ENCODE measurements at regions of chrX and their contacts with region 1.

Region 1: DNA sequence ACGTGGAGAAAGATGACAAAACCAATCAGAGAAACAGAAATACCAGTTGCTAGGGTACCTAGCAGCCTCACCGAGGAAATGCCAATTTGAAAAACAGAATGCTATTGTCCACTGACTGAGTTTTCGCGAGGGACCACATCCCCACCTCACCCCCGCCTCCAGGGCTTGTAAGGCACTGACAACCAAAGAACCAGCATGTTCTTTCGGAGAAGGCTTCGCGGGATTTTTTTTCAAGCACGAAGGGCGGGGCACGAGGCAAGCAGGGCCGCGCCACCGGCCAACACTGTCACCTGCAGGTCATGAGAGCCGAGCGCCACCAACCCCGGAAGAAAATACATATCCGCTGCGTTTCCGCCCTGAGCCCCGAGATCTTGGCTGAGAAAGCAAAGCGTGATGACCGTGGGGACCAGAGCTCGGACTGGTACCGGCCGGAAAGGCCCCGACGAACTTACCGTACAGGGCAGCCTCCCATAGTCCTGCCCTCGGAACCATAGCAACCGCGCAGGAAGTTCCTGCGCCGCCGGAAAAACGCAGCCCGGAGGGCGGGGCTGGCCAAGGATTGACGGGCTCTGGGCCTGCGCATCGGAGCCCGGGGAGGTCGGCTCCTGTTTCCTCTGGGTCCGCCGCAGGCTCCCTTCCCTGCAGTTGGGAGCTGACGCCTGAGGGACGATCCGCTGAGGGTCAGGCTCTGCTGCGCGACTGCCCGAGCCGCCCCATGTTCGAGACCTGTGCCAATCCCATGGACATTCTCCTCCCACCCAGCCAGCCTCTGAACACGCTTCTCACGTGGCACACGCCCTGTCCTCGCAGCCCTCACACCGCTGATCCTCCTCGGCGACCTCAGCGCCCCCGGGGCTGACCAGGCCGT is 59.2 kb upstream of the PAGE5 start:
- DNase-seq: peak; percentile 81 to 94 (median 91)
- ATAC-seq: peak; percentile 91
- H3K4me3 ChIP-seq: peak overlapping the region; percentile 74 to 89
- H3K4me3 Mint-ChIP-seq: peak overlapping the region; percentile 92
- H3K27ac ChIP-seq: peak overlapping the region; percentile 97
- H3K27ac Mint-ChIP-seq: peak overlapping the region; percentile 98
- H3K4me1 ChIP-seq: peaks cover 9% of the 10 kb centered on the region
- H3K4me1 Mint-ChIP-seq: peaks cover 16% of the 10 kb centered on the region
- H3K27me3 ChIP-seq: no peaks in the 10 kb centered on the region
- H3K27me3 Mint-ChIP-seq: no peaks in the 10 kb centered on the region
- CTCF ChIP-seq: peak; percentile 64

Region 2: GRCh38 chrX:53422086-53422860 is 1738.6 kb before region 1 on chrX and contains the start of gene SMC1A:
- CTCF ChIA-PET with region 1: no interaction called
- POLR2A ChIA-PET with region 1: no interaction called
- intact Hi-C with region 1: loop called in 1 of 2 experiments (anchors 5 kb)
- DNase-seq: peak; percentile 86 to 98 (median 96)
- ATAC-seq: peak; percentile 89
- H3K4me3 ChIP-seq: peak within 1 kb of the TSS; percentile 92 to 94
- H3K4me3 Mint-ChIP-seq: peak within 1 kb of the TSS; percentile 94
- H3K27ac ChIP-seq: peak within 1 kb of the TSS; percentile 95 to 99
- H3K27ac Mint-ChIP-seq: peak within 1 kb of the TSS; percentile 95
- H3K4me1 ChIP-seq: peaks cover 18% of the 10 kb centered on the region
- H3K4me1 Mint-ChIP-seq: peaks cover 33% of the 10 kb centered on the region
- H3K27me3 ChIP-seq: no peaks in the 10 kb centered on the region
- H3K27me3 Mint-ChIP-seq: no peaks in the 10 kb centered on the region
- CTCF ChIP-seq: no peak
- total RNA-seq, gene SMC1A: 23.7 to 25.3 TPM

Region 3: GRCh38 chrX:54182864-54183608 is 977.9 kb before region 1 on chrX and contains the start of gene FAM120C:
- CTCF ChIA-PET with region 1: no interaction called
- POLR2A ChIA-PET with region 1: no interaction called
- intact Hi-C with region 1: loop called in 1 of 2 experiments (anchors 5 kb)
- DNase-seq: peak; percentile 26 to 83 (median 59)
- ATAC-seq: peak; percentile 70
- H3K4me3 ChIP-seq: peak within 1 kb of the TSS; percentile 60 to 72
- H3K4me3 Mint-ChIP-seq: peak within 1 kb of the TSS; percentile 78
- H3K27ac ChIP-seq: peak within 1 kb of the TSS; percentile 75 to 83
- H3K27ac Mint-ChIP-seq: peak within 1 kb of the TSS; percentile 88
- H3K4me1 ChIP-seq: peaks cover 38% of the 10 kb centered on the region
- H3K4me1 Mint-ChIP-seq: peaks cover 43% of the 10 kb centered on the region
- H3K27me3 ChIP-seq: no peaks in the 10 kb centered on the region
- H3K27me3 Mint-ChIP-seq: no peaks in the 10 kb centered on the region
- CTCF ChIP-seq: no peak
- total RNA-seq, gene FAM120C: 10.9 to 11.1 TPM

Region 4: GRCh38 chrX:54639346-54640102 is 521.4 kb before region 1 on chrX:
- CTCF ChIA-PET with region 1: no interaction called
- POLR2A ChIA-PET with region 1: no interaction called
- intact Hi-C with region 1: loop called in 1 of 2 experiments (anchors 5 kb)
- DNase-seq: peak; percentile 80 to 97 (median 92)
- ATAC-seq: peak; percentile 88
- H3K4me3 ChIP-seq: peak overlapping the region; percentile 60 to 94
- H3K4me3 Mint-ChIP-seq: peak overlapping the region; percentile 97
- H3K27ac ChIP-seq: peak overlapping the region; percentile 97 to 99
- H3K27ac Mint-ChIP-seq: peak overlapping the region; percentile 99
- H3K4me1 ChIP-seq: peaks cover 6% of the 10 kb centered on the region
- H3K4me1 Mint-ChIP-seq: peaks cover 9% of the 10 kb centered on the region
- H3K27me3 ChIP-seq: no peaks in the 10 kb centered on the region
- H3K27me3 Mint-ChIP-seq: no peaks in the 10 kb centered on the region
- CTCF ChIP-seq: peak; percentile 22

Region 5: DNA sequence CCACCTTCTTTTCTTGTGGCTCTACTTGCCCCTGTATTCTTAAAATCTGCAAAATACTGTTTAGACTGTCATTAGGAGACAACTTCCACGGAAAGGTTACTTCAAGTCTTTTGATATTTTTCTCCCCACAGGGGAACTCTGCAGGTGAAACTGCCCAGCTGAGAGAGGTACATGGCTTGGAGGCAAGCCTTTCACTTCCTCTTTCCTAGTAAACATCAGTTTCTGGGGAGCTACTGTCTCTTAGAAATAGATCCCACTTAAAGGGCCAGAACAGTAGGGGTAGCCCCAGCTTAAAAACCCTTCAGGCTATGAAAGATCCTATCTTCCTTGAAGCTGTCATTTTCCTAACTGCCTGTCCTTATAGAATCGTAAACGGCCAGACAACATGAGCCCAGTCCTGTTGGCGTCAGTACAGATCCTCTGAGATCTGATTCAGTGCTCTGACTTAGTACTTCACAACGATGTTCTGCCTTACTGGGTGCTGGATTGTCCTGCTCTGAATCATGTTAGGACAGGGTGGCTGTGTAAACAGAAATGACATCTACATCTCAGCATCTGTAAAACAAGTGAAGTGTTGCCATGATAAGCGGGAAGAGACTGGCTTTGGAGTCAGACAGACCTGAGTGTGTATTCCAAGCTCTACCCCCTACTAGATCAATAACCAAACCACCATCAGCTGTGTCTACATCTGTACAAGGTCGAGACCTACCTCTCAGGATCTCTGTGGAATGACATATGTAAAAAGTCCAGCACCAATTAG is 464.9 kb before region 1 on chrX:
- CTCF ChIA-PET with region 1: no interaction called
- POLR2A ChIA-PET with region 1: no interaction called
- intact Hi-C with region 1: no loop called
- DNase-seq: no peak
- ATAC-seq: no peak
- H3K4me3 ChIP-seq: no peak overlapping the region
- H3K4me3 Mint-ChIP-seq: no peak overlapping the region
- H3K27ac ChIP-seq: no peak overlapping the region
- H3K27ac Mint-ChIP-seq: no peak overlapping the region
- H3K4me1 ChIP-seq: no peaks in the 10 kb centered on the region
- H3K4me1 Mint-ChIP-seq: no peaks in the 10 kb centered on the region
- H3K27me3 ChIP-seq: no peaks in the 10 kb centered on the region
- H3K27me3 Mint-ChIP-seq: peaks cover 2% of the 10 kb centered on the region
- CTCF ChIP-seq: no peak

Region 6: DNA sequence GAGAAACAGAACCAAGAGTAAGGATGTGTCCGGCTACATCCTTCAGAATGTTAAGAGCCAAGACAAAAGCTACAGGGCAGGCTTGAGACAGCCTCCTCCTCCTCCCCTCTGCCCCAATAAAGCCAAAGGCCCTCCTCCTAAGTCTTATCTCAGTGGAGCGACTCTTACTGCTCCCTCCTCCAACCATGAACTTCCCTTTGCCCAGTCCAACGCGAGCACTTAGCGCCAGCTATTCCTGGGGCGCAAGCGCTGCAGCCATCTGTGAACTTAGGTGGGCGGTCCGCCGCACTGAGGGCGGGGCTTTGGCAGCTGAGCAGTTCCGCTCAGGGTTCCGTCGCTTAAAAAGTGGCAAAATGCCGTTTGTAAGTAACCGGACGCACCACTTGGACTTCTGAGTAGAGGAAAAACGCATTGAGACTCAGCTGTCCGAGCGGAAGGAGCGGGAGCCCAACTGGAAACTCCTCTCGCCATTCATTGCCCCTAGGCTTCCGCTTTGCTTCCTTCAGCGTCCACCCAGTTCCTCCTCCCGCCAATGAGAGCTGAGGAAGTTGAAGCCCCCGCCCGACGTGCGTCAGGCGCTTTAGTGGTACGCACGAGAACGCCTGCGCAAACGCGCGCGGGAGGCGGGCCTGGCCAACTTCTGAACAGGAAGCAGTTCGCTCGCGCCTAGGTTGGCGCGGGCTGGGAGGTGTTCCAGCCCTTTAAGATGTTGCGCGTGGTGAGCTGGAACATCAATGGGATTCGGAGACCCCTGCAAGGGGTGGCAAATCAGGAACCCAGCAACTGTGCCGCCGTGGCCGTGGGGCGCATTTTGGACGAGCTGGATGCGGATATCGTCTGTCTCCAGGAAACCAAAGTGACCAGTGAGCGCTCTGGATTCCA is 161.0 kb before region 1 on chrX and contains the start of gene APEX2:
- CTCF ChIA-PET with region 1: no interaction called
- POLR2A ChIA-PET with region 1: interaction called, 4 read pairs
- intact Hi-C with region 1: loop called (anchors 1 to 2 kb)
- DNase-seq: peak; percentile 74 to 94 (median 86)
- ATAC-seq: peak; percentile 94
- H3K4me3 ChIP-seq: peak within 1 kb of the TSS; percentile 70 to 71
- H3K4me3 Mint-ChIP-seq: peak within 1 kb of the TSS; percentile 92
- H3K27ac ChIP-seq: peak within 1 kb of the TSS; percentile 97 to 98
- H3K27ac Mint-ChIP-seq: peak within 1 kb of the TSS; percentile 96
- H3K4me1 ChIP-seq: peaks cover 12% of the 10 kb centered on the region
- H3K4me1 Mint-ChIP-seq: peaks cover 35% of the 10 kb centered on the region
- H3K27me3 ChIP-seq: no peaks in the 10 kb centered on the region
- H3K27me3 Mint-ChIP-seq: no peaks in the 10 kb centered on the region
- CTCF ChIP-seq: no peak
- total RNA-seq, gene APEX2: 6.6 to 7.5 TPM

Region 7: GRCh38 chrX:55342533-55343501 is 181.9 kb after region 1 on chrX:
- CTCF ChIA-PET with region 1: no interaction called
- POLR2A ChIA-PET with region 1: interaction called, 3 read pairs
- intact Hi-C with region 1: loop called in 1 of 2 experiments (anchors 10 kb)
- DNase-seq: peak in 6 of 9 experiments; percentile 1 to 64 (median 28)
- ATAC-seq: peak; percentile 85
- H3K4me3 ChIP-seq: no peak overlapping the region
- H3K4me3 Mint-ChIP-seq: peak overlapping the region; percentile 4
- H3K27ac ChIP-seq: no peak overlapping the region
- H3K27ac Mint-ChIP-seq: no peak overlapping the region
- H3K4me1 ChIP-seq: peaks cover 6% of the 10 kb centered on the region
- H3K4me1 Mint-ChIP-seq: peaks cover 10% of the 10 kb centered on the region
- H3K27me3 ChIP-seq: no peaks in the 10 kb centered on the region
- H3K27me3 Mint-ChIP-seq: peaks cover 3% of the 10 kb centered on the region
- CTCF ChIP-seq: no peak

Region 8: GRCh38 chrX:56563231-56564161 is 1402.6 kb after region 1 on chrX and contains the start of gene UBQLN2:
- CTCF ChIA-PET with region 1: no interaction called
- POLR2A ChIA-PET with region 1: no interaction called
- intact Hi-C with region 1: loop called in 1 of 2 experiments (anchors 10 kb)
- DNase-seq: peak; percentile 51 to 88 (median 77)
- ATAC-seq: peak; percentile 78
- H3K4me3 ChIP-seq: peak within 1 kb of the TSS; percentile 77 to 83
- H3K4me3 Mint-ChIP-seq: peak within 1 kb of the TSS; percentile 94
- H3K27ac ChIP-seq: peak within 1 kb of the TSS; percentile 93 to 94
- H3K27ac Mint-ChIP-seq: peak within 1 kb of the TSS; percentile 99
- H3K4me1 ChIP-seq: no peaks in the 10 kb centered on the region
- H3K4me1 Mint-ChIP-seq: peaks cover 22% of the 10 kb centered on the region
- H3K27me3 ChIP-seq: no peaks in the 10 kb centered on the region
- H3K27me3 Mint-ChIP-seq: no peaks in the 10 kb centered on the region
- CTCF ChIP-seq: no peak
- total RNA-seq, gene UBQLN2: 34.3 to 35.6 TPM